CD8-positive, alpha-beta T cell (primary cell): ENCODE measurements at regions of chr6 and their contacts with region 1.

Region 1: GRCh38 chr6:128731249-128732165 is 151.4 kb upstream of the LAMA2 start:
- DNase-seq: peak in 2 of 9 experiments; percentile 33 to 49
- ATAC-seq: no peak
- H3K4me3 ChIP-seq: no peak overlapping the region
- H3K4me3 Mint-ChIP-seq: no peak overlapping the region
- H3K27ac ChIP-seq: no peak overlapping the region
- H3K27ac Mint-ChIP-seq: no peak overlapping the region
- H3K4me1 ChIP-seq: no peaks in the 10 kb centered on the region
- H3K4me1 Mint-ChIP-seq: no peaks in the 10 kb centered on the region
- H3K27me3 ChIP-seq: no peaks in the 10 kb centered on the region
- H3K27me3 Mint-ChIP-seq: peaks cover 11% of the 10 kb centered on the region
- CTCF ChIP-seq: peak; percentile 40

Region 2: DNA sequence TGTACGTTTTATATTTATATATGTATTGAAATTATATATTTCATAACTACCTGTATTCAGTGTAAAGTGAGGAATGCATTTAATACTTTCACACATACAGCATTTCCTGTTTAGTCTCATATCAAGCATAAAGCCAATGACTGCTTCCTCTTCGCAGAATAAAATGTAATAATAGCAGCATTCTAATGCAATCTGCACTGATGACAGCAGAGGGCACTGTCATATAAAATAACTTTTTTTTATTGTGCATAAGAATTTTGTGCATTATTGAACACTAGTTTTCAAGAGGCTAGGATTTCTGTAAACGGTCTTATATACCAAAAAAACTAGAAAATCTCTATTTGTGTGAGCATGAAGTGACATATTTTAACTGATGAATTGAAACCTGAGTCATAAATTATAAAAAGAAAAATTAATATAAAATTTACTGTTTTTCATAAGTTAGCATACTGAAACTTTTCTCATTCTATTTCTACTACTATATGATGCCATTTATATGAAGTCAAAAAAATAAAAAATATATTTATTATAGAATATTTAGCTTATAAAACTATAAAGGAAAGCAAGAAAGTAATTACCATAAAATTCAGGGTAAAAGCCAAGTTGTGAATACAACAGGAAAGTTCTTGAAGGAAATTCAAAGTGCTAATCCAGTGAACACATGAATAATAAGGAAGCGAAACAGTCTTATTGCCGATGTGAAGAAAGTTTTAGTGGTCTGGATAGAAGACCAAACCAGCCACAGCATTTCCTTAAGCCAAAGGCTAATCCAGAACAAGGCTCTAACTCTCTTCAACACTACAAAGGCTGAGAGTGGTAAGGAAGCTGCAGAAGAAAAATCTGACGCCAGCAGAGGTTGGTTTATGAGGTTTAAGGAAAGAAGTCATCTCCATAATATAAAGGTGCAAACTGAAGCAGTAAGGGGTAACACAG is 1428.5 kb before region 1 on chr6:
- CTCF ChIA-PET with region 1: no interaction called
- POLR2A ChIA-PET with region 1: no interaction called
- intact Hi-C with region 1: loop called in 1 of 2 experiments (anchors 10 kb)
- DNase-seq: peak in 7 of 9 experiments; percentile 13 to 69 (median 45)
- ATAC-seq: peak; percentile 97
- H3K4me3 ChIP-seq: no peak overlapping the region
- H3K4me3 Mint-ChIP-seq: no peak overlapping the region
- H3K27ac ChIP-seq: no peak overlapping the region
- H3K27ac Mint-ChIP-seq: no peak overlapping the region
- H3K4me1 ChIP-seq: no peaks in the 10 kb centered on the region
- H3K4me1 Mint-ChIP-seq: peaks cover 43% of the 10 kb centered on the region
- H3K27me3 ChIP-seq: no peaks in the 10 kb centered on the region
- H3K27me3 Mint-ChIP-seq: no peaks in the 10 kb centered on the region
- CTCF ChIP-seq: peak; percentile 96

Region 3: GRCh38 chr6:127464881-127465459 is 1266.5 kb before region 1 on chr6:
- CTCF ChIA-PET with region 1: no interaction called
- POLR2A ChIA-PET with region 1: no interaction called
- intact Hi-C with region 1: loop called in 1 of 2 experiments (anchors 5 kb)
- DNase-seq: peak; percentile 17 to 68 (median 50)
- ATAC-seq: peak; percentile 51
- H3K4me3 ChIP-seq: no peak overlapping the region
- H3K4me3 Mint-ChIP-seq: no peak overlapping the region
- H3K27ac ChIP-seq: no peak overlapping the region
- H3K27ac Mint-ChIP-seq: no peak overlapping the region
- H3K4me1 ChIP-seq: no peaks in the 10 kb centered on the region
- H3K4me1 Mint-ChIP-seq: no peaks in the 10 kb centered on the region
- H3K27me3 ChIP-seq: no peaks in the 10 kb centered on the region
- H3K27me3 Mint-ChIP-seq: no peaks in the 10 kb centered on the region
- CTCF ChIP-seq: peak; percentile 72

Region 4: DNA sequence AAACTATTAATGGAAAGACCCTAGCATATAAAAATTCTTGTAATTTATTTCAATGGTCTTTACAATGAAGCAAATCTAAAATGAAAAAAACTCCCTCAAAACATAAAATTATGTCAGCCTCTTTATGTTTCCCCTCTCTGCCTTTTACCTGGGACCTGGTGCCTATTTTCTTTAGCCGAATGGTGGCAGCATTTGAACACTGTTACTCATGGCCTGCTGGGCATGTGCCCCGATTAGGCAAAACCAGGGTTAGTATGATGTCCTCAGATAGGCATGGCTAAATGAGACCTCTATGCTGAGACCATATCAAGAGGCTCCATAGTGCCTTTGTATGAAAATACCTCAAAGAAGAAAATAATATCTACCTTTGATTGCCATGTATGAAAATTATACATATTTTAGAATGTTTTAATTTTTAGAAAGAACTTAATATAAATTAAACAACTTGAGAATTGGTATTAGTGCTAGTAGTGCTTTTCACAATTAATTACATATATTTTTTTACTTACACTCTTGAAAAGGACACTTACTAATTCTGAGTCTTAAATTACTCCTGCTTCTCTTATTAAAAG is 1177.0 kb before region 1 on chr6:
- CTCF ChIA-PET with region 1: no interaction called
- POLR2A ChIA-PET with region 1: no interaction called
- intact Hi-C with region 1: loop called in 1 of 2 experiments (anchors 1 kb)
- DNase-seq: peak in 2 of 9 experiments; percentile 27 to 39
- ATAC-seq: no peak
- H3K4me3 ChIP-seq: no peak overlapping the region
- H3K4me3 Mint-ChIP-seq: no peak overlapping the region
- H3K27ac ChIP-seq: no peak overlapping the region
- H3K27ac Mint-ChIP-seq: no peak overlapping the region
- H3K4me1 ChIP-seq: no peaks in the 10 kb centered on the region
- H3K4me1 Mint-ChIP-seq: no peaks in the 10 kb centered on the region
- H3K27me3 ChIP-seq: no peaks in the 10 kb centered on the region
- H3K27me3 Mint-ChIP-seq: peaks cover 30% of the 10 kb centered on the region
- CTCF ChIP-seq: no peak

Region 5: DNA sequence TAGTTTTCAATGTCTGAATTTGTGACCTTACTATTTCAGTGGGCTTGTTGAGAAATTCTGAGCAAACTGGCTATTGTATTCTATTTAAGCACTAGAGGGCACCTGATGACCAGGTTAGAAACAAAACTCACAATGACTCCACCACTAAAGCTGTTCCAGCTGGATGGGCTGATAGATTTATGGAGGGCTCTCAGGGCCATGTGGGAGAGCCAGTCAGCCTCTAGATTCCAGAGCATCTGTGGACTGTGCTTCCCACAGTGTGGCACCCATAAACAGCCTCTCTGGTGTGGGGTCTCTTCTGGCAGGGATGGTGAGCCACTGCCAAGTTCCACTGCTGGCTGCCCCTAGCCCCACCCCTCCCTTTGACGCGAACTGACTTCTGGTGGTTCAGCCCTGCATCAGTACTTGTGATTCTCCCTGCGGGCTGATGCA is 1125.4 kb before region 1 on chr6:
- CTCF ChIA-PET with region 1: interaction called, 4 read pairs
- POLR2A ChIA-PET with region 1: no interaction called
- intact Hi-C with region 1: loop called (anchors 1 kb)
- DNase-seq: peak in 3 of 9 experiments; percentile 19 to 45 (median 33)
- ATAC-seq: no peak
- H3K4me3 ChIP-seq: no peak overlapping the region
- H3K4me3 Mint-ChIP-seq: no peak overlapping the region
- H3K27ac ChIP-seq: no peak overlapping the region
- H3K27ac Mint-ChIP-seq: no peak overlapping the region
- H3K4me1 ChIP-seq: no peaks in the 10 kb centered on the region
- H3K4me1 Mint-ChIP-seq: no peaks in the 10 kb centered on the region
- H3K27me3 ChIP-seq: no peaks in the 10 kb centered on the region
- H3K27me3 Mint-ChIP-seq: peaks cover 2% of the 10 kb centered on the region
- CTCF ChIP-seq: peak; percentile 15